Activated CD8-positive, alpha-beta T cell treated with anti-CD3 and anti-CD28 coated beads, Interleukin-2, amount 10 ng/mL, durations not matched to agents 7 days and 5 days (primary cell): ENCODE measurements at regions of chr1 and their contacts with region 1.

Region 1: GRCh38 chr1:89085781-89086180 is 20.8 kb upstream of the GBP1 start:
- DNase-seq: peak; percentile 59
- ATAC-seq: peak; percentile 76
- H3K4me3 Mint-ChIP-seq: no peak overlapping the region
- H3K27ac Mint-ChIP-seq: no peak overlapping the region
- H3K4me1 Mint-ChIP-seq: peaks cover 3% of the 10 kb centered on the region
- H3K27me3 Mint-ChIP-seq: no peaks in the 10 kb centered on the region

Region 2: GRCh38 chr1:88983791-88984559 is 101.8 kb before region 1 on chr1:
- CTCF ChIA-PET with region 1: interaction called, 13 read pairs
- POLR2A ChIA-PET with region 1: interaction called, 3 read pairs
- DNase-seq: peak; percentile 43
- ATAC-seq: peak; percentile 76
- H3K4me3 Mint-ChIP-seq: peak overlapping the region; percentile 48
- H3K27ac Mint-ChIP-seq: peak overlapping the region; percentile 56
- H3K4me1 Mint-ChIP-seq: peaks cover 69% of the 10 kb centered on the region
- H3K27me3 Mint-ChIP-seq: no peaks in the 10 kb centered on the region

Region 3: GRCh38 chr1:88998716-88999115 is 87.1 kb before region 1 on chr1:
- CTCF ChIA-PET with region 1: interaction called, 12 read pairs
- POLR2A ChIA-PET with region 1: no interaction called
- DNase-seq: peak; percentile 46
- ATAC-seq: peak; percentile 88
- H3K4me3 Mint-ChIP-seq: no peak overlapping the region
- H3K27ac Mint-ChIP-seq: no peak overlapping the region
- H3K4me1 Mint-ChIP-seq: peaks cover 28% of the 10 kb centered on the region
- H3K27me3 Mint-ChIP-seq: no peaks in the 10 kb centered on the region

Region 4: DNA sequence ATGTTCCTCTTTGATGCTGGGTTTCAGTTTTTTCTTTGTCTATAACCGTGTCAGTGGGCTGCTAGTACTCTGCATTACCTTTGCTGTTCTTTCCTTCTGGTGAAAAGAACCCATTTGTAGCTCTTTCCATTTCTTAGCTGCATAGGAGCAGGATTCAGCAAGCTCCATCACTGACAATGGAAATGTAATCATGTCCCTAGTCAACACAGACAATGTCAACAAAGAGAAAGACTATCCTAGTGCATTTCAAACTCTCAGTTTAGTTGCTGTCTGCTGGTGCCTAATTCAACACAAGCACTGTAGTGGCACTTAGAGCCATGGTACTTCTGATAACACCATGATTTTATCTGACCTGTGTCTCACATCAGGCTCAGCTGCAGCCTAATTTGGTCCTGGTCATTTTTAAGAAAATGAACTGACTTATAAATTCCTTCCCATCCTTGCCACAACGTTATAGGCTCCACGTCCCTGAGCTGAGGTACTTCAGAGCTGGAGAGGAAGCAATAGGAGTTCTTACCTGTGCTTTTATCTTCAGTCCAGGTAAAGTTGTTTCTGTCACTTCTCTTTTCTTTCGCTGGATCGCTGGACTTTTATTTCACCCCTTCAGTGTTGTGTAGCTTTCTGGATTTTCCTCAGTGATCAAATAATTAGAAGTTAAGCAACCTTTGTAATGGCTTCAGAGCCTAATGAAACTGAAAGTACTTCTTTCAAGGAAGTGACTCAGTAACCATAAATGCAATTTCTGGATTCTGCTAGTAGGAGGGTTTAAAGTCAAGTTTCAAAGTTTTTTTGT is 63.4 kb before region 1 on chr1 and contains the start of gene GBP3:
- CTCF ChIA-PET with region 1: interaction called, 10 read pairs
- POLR2A ChIA-PET with region 1: interaction called, 4 read pairs
- DNase-seq: peak; percentile 37
- ATAC-seq: peak; percentile 79
- H3K4me3 Mint-ChIP-seq: peak within 1 kb of the TSS; percentile 79
- H3K27ac Mint-ChIP-seq: peak within 1 kb of the TSS; percentile 82
- H3K4me1 Mint-ChIP-seq: peaks cover 43% of the 10 kb centered on the region
- H3K27me3 Mint-ChIP-seq: no peaks in the 10 kb centered on the region
- total RNA-seq, gene GBP3: 16.7 to 18.9 TPM

Region 5: GRCh38 chr1:89035080-89035479 is 50.7 kb before region 1 on chr1:
- CTCF ChIA-PET with region 1: no interaction called
- POLR2A ChIA-PET with region 1: no interaction called
- DNase-seq: no peak
- ATAC-seq: peak; percentile 39
- H3K4me3 Mint-ChIP-seq: no peak overlapping the region
- H3K27ac Mint-ChIP-seq: no peak overlapping the region
- H3K4me1 Mint-ChIP-seq: peaks cover 10% of the 10 kb centered on the region
- H3K27me3 Mint-ChIP-seq: no peaks in the 10 kb centered on the region

Region 6: DNA sequence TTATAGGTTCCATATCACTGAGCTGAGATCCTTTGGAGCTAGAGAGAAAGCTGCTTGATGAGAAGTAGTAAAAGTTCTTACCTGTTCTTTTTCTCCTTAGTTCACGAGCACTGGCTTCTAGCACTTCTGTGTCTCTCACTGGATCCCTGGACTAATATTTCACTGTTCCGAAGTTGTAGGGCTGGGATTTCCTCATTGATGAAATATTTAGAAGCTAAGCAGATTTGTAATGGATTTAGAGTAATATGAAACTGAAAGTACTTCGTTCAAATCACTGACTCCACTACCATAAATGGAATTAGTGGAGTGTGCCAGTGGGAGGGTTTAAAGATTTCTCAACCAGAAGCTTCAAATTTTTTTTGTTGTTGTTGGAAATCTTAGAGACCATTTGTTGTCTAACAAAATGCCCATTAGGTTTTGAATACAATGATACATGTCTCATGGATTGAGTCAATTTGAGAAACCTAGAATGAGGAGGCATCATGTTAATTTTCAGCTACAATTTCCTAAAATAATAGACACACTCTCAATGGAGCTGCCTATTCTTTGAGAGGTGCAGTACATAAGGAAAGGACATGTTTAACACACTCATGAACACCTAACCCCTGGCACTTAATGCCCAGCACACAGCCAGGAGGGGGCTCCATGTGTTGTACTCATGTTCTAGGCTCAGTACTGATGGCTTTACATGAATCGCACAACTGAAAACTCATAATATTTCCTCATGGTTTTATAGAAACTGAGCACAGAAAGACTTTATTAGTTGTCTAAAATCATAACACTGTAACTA is 20.5 kb before region 1 on chr1 and contains the start of gene GBP1:
- CTCF ChIA-PET with region 1: interaction called, 23 read pairs
- POLR2A ChIA-PET with region 1: no interaction called
- DNase-seq: peak; percentile 43
- ATAC-seq: peak; percentile 82
- H3K4me3 Mint-ChIP-seq: peak within 1 kb of the TSS; percentile 90
- H3K27ac Mint-ChIP-seq: peak within 1 kb of the TSS; percentile 90
- H3K4me1 Mint-ChIP-seq: peaks cover 55% of the 10 kb centered on the region
- H3K27me3 Mint-ChIP-seq: no peaks in the 10 kb centered on the region
- total RNA-seq, gene GBP1: 146 to 147 TPM

Region 7: DNA sequence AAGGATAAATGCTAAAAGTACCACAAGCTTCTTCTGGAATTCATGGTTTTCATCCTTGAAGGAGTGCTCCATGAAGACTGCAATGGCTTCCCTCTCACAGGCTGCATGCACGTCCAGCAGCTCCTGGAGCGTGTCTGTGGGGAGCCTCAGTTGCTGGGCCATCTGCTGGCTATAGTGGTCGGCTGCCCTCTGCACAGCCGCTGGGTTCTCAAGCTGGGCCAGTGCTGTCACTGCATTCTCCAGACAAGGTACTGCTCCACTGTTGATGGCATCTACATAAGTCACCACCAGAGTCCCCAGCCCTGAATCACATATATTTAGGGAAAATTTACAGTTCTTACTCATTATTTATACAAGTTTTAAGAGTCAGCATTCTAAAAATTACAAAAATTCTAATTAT is 104.2 kb after region 1 on chr1:
- CTCF ChIA-PET with region 1: no interaction called
- POLR2A ChIA-PET with region 1: no interaction called
- DNase-seq: no peak
- ATAC-seq: no peak
- H3K4me3 Mint-ChIP-seq: no peak overlapping the region
- H3K27ac Mint-ChIP-seq: no peak overlapping the region
- H3K4me1 Mint-ChIP-seq: peaks cover 21% of the 10 kb centered on the region
- H3K27me3 Mint-ChIP-seq: no peaks in the 10 kb centered on the region

Region 8: DNA sequence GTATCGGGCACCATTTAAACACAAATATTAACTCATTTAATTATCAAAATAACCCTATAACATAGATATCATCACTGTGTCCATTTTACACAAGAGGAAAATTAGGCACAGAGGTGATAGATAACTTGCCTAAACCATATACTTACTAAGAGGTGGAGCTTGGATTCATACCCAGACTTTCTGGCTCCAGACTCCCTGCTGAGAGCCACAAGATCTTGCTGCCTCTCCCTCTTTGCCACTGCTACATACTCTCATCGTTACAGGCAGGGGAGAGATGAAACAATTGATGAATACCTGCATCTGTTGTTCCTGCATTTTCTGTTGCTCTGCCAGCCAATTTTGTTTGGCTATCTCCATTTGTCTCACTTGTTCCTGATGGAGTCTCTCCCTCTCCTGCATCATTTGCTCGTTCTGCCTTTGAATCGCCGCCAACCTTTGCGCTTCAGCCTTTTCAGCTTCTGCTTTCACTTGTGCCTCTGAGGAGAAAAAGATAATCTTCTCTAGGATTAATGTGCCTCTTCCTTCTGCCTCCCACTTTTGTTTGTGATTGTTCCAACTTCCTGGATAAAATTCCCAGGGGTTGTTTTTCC is 176.2 kb after region 1 on chr1:
- CTCF ChIA-PET with region 1: interaction called, 10 read pairs
- POLR2A ChIA-PET with region 1: no interaction called
- DNase-seq: no peak
- ATAC-seq: no peak
- H3K4me3 Mint-ChIP-seq: peak overlapping the region; percentile 65
- H3K27ac Mint-ChIP-seq: peak overlapping the region; percentile 40
- H3K4me1 Mint-ChIP-seq: peaks cover 79% of the 10 kb centered on the region
- H3K27me3 Mint-ChIP-seq: no peaks in the 10 kb centered on the region

Region 9: GRCh38 chr1:89454845-89455521 is 369.2 kb after region 1 on chr1:
- CTCF ChIA-PET with region 1: interaction called, 12 read pairs
- POLR2A ChIA-PET with region 1: no interaction called
- DNase-seq: peak; percentile 79
- ATAC-seq: peak; percentile 75
- H3K4me3 Mint-ChIP-seq: no peak overlapping the region
- H3K27ac Mint-ChIP-seq: no peak overlapping the region
- H3K4me1 Mint-ChIP-seq: peaks cover 13% of the 10 kb centered on the region
- H3K27me3 Mint-ChIP-seq: peaks cover 32% of the 10 kb centered on the region

Region 10: DNA sequence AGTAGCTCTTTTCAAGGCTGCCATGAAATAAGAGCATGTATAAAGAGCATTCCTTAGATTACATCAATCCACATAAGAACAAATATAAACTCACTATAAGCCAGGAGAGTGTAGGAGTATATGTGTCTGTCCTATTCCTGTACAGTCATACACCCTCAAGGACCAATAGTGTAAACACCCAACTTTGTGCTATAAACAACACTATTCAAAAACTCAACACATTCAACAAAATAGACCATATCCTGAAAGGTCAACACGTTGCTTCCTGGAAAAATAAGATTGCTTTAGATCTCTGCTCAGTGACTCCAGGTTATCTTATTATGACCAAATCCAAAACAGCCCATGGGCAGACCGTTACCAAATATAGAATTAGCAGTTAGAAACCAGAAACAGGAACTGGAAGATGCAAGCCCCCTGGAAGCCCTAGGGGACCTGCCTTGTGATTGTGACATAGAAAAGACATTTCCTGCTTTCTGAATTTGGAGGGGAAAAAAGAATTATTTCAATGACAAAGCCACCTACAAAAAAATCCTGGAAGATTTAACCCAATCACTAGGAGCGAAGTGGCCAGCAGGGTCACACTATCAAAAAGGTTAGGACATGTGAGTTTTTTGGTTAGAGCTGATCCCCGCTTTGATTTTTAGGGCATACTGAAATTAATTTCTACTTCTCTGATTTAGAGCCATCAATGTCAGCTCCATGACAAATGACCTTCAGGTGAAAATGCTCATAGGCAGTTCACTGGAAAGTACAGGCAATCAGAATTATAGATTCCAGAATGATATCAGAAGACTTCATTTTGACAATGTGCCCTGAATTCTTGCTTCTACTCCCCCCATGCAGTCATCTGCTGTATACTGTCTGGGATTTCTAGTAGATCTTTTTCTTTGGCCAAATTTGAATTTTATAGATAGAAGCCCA is 607.1 kb after region 1 on chr1:
- CTCF ChIA-PET with region 1: no interaction called
- POLR2A ChIA-PET with region 1: no interaction called
- DNase-seq: no peak
- ATAC-seq: peak; percentile 45
- H3K4me3 Mint-ChIP-seq: no peak overlapping the region
- H3K27ac Mint-ChIP-seq: peak overlapping the region; percentile 74
- H3K4me1 Mint-ChIP-seq: peaks cover 61% of the 10 kb centered on the region
- H3K27me3 Mint-ChIP-seq: no peaks in the 10 kb centered on the region